B cell (primary cell): ENCODE measurements at regions of chr19 and their contacts with region 1.

Region 1: GRCh38 chr19:10936661-10937084 is 8.1 kb downstream of the TIMM29 start:
- DNase-seq: peak; percentile 73
- ATAC-seq: peak; percentile 60
- H3K4me3 ChIP-seq: no peak overlapping the region
- H3K4me3 Mint-ChIP-seq: peak overlapping the region; percentile 34
- H3K27ac ChIP-seq: no peak overlapping the region
- H3K27ac Mint-ChIP-seq: no peak overlapping the region
- H3K4me1 ChIP-seq: peaks cover 0 to 4% of the 10 kb centered on the region in 2 donors
- H3K4me1 Mint-ChIP-seq: peaks cover 2% of the 10 kb centered on the region
- H3K27me3 ChIP-seq: no peaks in the 10 kb centered on the region
- H3K27me3 Mint-ChIP-seq: no peaks in the 10 kb centered on the region
- CTCF ChIP-seq: peak; percentile 73

Region 2: DNA sequence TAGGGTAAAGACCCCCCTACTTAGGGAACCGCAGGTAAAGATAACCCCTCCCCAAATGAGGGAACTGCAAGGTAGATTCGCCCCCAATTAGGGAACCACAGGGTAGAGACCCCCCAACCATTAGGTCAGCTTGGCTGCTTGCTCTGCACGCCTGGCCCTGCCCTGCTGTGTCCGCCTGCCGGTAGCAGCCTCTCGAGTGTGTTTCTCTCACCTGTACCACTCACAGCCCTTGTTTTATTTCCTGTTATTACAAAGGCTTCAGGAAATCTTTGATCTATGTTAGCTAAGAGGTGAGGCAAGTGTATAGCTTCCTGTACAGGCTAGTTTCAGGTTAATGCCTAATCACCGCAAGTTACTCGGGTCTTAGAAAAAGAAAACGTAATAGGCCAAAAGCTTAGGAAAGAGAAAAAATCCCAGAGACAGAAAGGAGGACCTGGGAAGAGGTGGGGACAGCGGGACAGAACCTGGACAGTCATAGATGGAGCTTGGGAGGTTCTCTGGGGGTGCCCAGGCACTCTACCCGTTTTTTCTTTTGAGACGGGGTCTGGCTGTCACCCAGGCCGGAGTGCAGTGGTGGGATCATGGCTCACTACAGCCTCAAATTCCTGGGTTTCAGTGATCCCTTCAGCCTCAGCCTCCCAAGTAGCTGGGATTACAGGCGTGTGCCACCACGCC is 793.8 kb before region 1 on chr19:
- CTCF ChIA-PET with region 1: no interaction called
- POLR2A ChIA-PET with region 1: no interaction called
- intact Hi-C with region 1: no loop called
- DNase-seq: no peak
- ATAC-seq: no peak
- H3K4me3 ChIP-seq: no peak overlapping the region
- H3K4me3 Mint-ChIP-seq: no peak overlapping the region
- H3K27ac ChIP-seq: no peak overlapping the region
- H3K27ac Mint-ChIP-seq: no peak overlapping the region
- H3K4me1 ChIP-seq: no peaks in the 10 kb centered on the region
- H3K4me1 Mint-ChIP-seq: no peaks in the 10 kb centered on the region
- H3K27me3 ChIP-seq: no peaks in the 10 kb centered on the region
- H3K27me3 Mint-ChIP-seq: no peaks in the 10 kb centered on the region
- CTCF ChIP-seq: no peak

Region 3: GRCh38 chr19:10870955-10871603 is 65.6 kb before region 1 on chr19 and contains the start of gene CARM1:
- CTCF ChIA-PET with region 1: interaction called, 10 read pairs
- POLR2A ChIA-PET with region 1: interaction called, 3 read pairs
- intact Hi-C with region 1: no loop called
- DNase-seq: peak; percentile 99
- ATAC-seq: peak; percentile 83
- H3K4me3 ChIP-seq: peak within 1 kb of the TSS; percentile 41 to 79 (median 67)
- H3K4me3 Mint-ChIP-seq: peak within 1 kb of the TSS; percentile 86
- H3K27ac ChIP-seq: peak within 1 kb of the TSS; percentile 75 to 79
- H3K27ac Mint-ChIP-seq: peak within 1 kb of the TSS; percentile 85
- H3K4me1 ChIP-seq: peaks cover 33 to 46% of the 10 kb centered on the region in 2 donors
- H3K4me1 Mint-ChIP-seq: peaks cover 43% of the 10 kb centered on the region
- H3K27me3 ChIP-seq: no peaks in the 10 kb centered on the region
- H3K27me3 Mint-ChIP-seq: no peaks in the 10 kb centered on the region
- CTCF ChIP-seq: peak; percentile 55
- total RNA-seq, gene CARM1: 29.4 and 33.0 TPM in 2 replicates

Region 4: GRCh38 chr19:10968527-10969135 is 32.0 kb after region 1 on chr19:
- CTCF ChIA-PET with region 1: interaction called, 23 read pairs
- POLR2A ChIA-PET with region 1: no interaction called
- intact Hi-C with region 1: no loop called
- DNase-seq: peak; percentile 66
- ATAC-seq: peak; percentile 53
- H3K4me3 ChIP-seq: peak overlapping the region in 2 of 5 experiments; percentile 13 to 38
- H3K4me3 Mint-ChIP-seq: peak overlapping the region; percentile 67
- H3K27ac ChIP-seq: peak overlapping the region; percentile 60 to 64
- H3K27ac Mint-ChIP-seq: peak overlapping the region; percentile 83
- H3K4me1 ChIP-seq: peaks cover 16 to 46% of the 10 kb centered on the region in 2 donors
- H3K4me1 Mint-ChIP-seq: peaks cover 43% of the 10 kb centered on the region
- H3K27me3 ChIP-seq: no peaks in the 10 kb centered on the region
- H3K27me3 Mint-ChIP-seq: no peaks in the 10 kb centered on the region
- CTCF ChIP-seq: no peak

Region 5: GRCh38 chr19:10979951-10980381 is 43.3 kb after region 1 on chr19:
- CTCF ChIA-PET with region 1: interaction called, 10 read pairs
- POLR2A ChIA-PET with region 1: no interaction called
- intact Hi-C with region 1: no loop called
- DNase-seq: peak; percentile 63
- ATAC-seq: peak; percentile 77
- H3K4me3 ChIP-seq: no peak overlapping the region
- H3K4me3 Mint-ChIP-seq: peak overlapping the region; percentile 62
- H3K27ac ChIP-seq: no peak overlapping the region
- H3K27ac Mint-ChIP-seq: no peak overlapping the region
- H3K4me1 ChIP-seq: peaks cover 3 to 25% of the 10 kb centered on the region in 2 donors
- H3K4me1 Mint-ChIP-seq: peaks cover 17% of the 10 kb centered on the region
- H3K27me3 ChIP-seq: no peaks in the 10 kb centered on the region
- H3K27me3 Mint-ChIP-seq: no peaks in the 10 kb centered on the region
- CTCF ChIP-seq: peak; percentile 15

Region 6: GRCh38 chr19:11046605-11047354 is 110.1 kb after region 1 on chr19:
- CTCF ChIA-PET with region 1: no interaction called
- POLR2A ChIA-PET with region 1: no interaction called
- intact Hi-C with region 1: no loop called
- DNase-seq: peak; percentile 62
- ATAC-seq: no peak
- H3K4me3 ChIP-seq: no peak overlapping the region
- H3K4me3 Mint-ChIP-seq: peak overlapping the region; percentile 45
- H3K27ac ChIP-seq: no peak overlapping the region
- H3K27ac Mint-ChIP-seq: no peak overlapping the region
- H3K4me1 ChIP-seq: peaks cover 54 to 66% of the 10 kb centered on the region in 2 donors
- H3K4me1 Mint-ChIP-seq: peaks cover 49% of the 10 kb centered on the region
- H3K27me3 ChIP-seq: peaks cover 0 to 18% (median 2%) of the 10 kb centered on the region in 4 experiments
- H3K27me3 Mint-ChIP-seq: peaks cover 15% of the 10 kb centered on the region
- CTCF ChIP-seq: no peak

Region 7: GRCh38 chr19:11168568-11168967 is 231.9 kb after region 1 on chr19:
- CTCF ChIA-PET with region 1: no interaction called
- POLR2A ChIA-PET with region 1: no interaction called
- intact Hi-C with region 1: no loop called
- DNase-seq: no peak
- ATAC-seq: no peak
- H3K4me3 ChIP-seq: no peak overlapping the region
- H3K4me3 Mint-ChIP-seq: no peak overlapping the region
- H3K27ac ChIP-seq: no peak overlapping the region
- H3K27ac Mint-ChIP-seq: no peak overlapping the region
- H3K4me1 ChIP-seq: no peaks in the 10 kb centered on the region
- H3K4me1 Mint-ChIP-seq: no peaks in the 10 kb centered on the region
- H3K27me3 ChIP-seq: no peaks in the 10 kb centered on the region
- H3K27me3 Mint-ChIP-seq: peaks cover 3% of the 10 kb centered on the region
- CTCF ChIP-seq: no peak

Region 8: GRCh38 chr19:11203194-11204075 is 266.8 kb after region 1 on chr19:
- CTCF ChIA-PET with region 1: interaction called, 12 read pairs
- POLR2A ChIA-PET with region 1: no interaction called
- intact Hi-C with region 1: loop called (anchors 5 kb)
- DNase-seq: no peak
- ATAC-seq: peak; percentile 50
- H3K4me3 ChIP-seq: no peak overlapping the region
- H3K4me3 Mint-ChIP-seq: no peak overlapping the region
- H3K27ac ChIP-seq: no peak overlapping the region
- H3K27ac Mint-ChIP-seq: no peak overlapping the region
- H3K4me1 ChIP-seq: peaks cover 0 to 8% of the 10 kb centered on the region in 2 donors
- H3K4me1 Mint-ChIP-seq: peaks cover 11% of the 10 kb centered on the region
- H3K27me3 ChIP-seq: peaks cover 0 to 3% (median 0%) of the 10 kb centered on the region in 4 experiments
- H3K27me3 Mint-ChIP-seq: peaks cover 3% of the 10 kb centered on the region
- CTCF ChIP-seq: peak; percentile 68